ENCODE measurements at regions of chr15 and their contacts with region 1.

Region 1: DNA sequence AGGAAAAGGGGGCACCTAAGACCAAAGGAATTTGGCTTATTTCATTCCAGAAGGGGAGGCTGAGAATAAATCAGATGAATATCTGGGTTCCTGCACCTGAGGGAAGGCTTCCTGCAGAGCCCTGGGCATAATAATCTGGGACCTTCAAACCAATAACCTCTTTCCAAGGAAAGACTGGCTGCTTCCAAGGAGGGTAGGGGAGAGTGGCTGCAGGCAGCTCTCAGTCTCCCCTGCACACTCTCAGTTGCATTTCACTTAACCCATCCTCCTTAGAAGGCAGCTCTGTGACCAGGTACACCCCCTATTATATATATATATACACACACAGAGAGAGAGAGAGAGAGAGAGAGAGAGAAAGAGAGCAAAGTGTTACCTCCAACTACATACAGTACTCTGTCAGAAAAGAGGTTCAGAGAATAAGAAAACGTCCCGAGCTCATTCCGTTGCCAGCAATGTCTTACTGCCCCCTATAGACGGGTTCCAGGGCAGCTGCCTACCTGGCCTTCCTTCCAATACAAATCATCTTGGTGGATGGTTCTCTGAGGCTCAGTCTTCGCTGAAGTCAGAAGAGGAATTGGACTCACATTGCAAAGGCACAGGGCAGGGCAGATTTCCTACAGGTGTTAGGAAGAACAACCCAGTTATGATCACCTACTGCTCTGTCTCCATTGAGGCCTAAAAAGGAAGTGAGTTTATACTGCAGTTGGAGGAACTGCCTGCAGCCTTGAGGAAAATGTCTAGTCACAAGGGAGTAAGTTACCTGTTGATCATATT is 26.1 kb downstream of the CAPN3 start:
- DNase-seq: peak; percentile 59
- H3K4me3 ChIP-seq: no peak overlapping the region
- H3K27ac ChIP-seq: no peak overlapping the region
- H3K4me1 ChIP-seq: peaks cover 11% of the 10 kb centered on the region
- H3K27me3 ChIP-seq: peaks cover 0 to 6% of the 10 kb centered on the region in 2 experiments
- CTCF ChIP-seq: peak; percentile 71 to 79
- POLR2A ChIP-seq: no peak

Region 2: GRCh38 chr15:42079401-42079908 is 305.9 kb before region 1 on chr15:
- CTCF ChIA-PET with region 1: interaction called, 6 read pairs
- POLR2A ChIA-PET with region 1: no interaction called
- dilution Hi-C with region 1: no loop called
- intact Hi-C with region 1: loop called (anchors 10 kb)
- DNase-seq: no peak
- H3K4me3 ChIP-seq: no peak overlapping the region
- H3K27ac ChIP-seq: no peak overlapping the region
- H3K4me1 ChIP-seq: no peaks in the 10 kb centered on the region
- H3K27me3 ChIP-seq: peaks cover 3 to 7% of the 10 kb centered on the region in 2 experiments
- CTCF ChIP-seq: no peak
- POLR2A ChIP-seq: no peak

Region 3: DNA sequence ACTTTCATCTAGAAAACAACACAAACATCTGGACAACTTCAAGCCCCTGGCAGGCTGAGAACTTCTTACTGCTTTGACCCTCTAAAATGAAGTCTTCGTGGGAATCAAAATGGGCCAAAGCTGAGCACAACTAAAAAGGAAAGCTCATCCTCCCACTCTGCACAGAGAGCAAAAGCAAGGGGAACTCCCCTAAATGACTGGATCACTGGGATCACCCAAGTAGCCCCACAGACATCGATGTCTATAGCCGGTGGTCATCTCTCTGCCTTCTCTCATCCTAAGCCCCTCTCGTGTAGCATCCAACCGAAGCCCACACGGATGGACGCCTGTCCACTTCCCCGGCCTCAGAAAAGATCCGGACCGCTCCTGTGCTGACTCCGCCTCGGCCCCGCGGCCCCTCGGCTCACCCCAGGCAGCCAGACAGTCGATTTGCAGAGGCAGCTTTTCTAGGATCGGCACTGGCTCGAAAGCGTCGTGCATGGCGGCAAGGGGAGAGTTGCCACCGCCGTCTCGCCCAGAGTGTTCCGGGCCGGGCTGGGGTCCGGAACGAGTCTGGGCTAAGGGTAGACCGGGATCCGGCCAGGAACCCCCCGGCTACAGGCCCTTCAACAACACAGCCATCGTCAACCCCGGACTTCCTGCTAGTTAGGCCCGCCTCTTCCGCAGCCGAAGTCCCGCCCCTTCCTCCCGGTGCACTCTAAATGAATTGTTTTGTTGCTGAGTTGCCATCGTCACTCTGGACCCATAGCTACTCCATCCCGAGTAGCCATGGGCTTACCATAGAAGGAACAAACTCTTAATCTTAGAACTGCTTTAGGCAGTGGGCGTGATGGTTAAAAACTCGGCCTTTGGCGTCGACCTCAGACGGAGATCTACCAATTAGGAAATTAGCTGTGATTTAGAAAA is 177.5 kb before region 1 on chr15 and contains the start of gene VPS39:
- CTCF ChIA-PET with region 1: interaction called, 7 read pairs
- POLR2A ChIA-PET with region 1: no interaction called
- dilution Hi-C with region 1: no loop called
- intact Hi-C with region 1: loop called (anchors 1 kb)
- DNase-seq: peak; percentile 92
- H3K4me3 ChIP-seq: peak within 1 kb of the TSS; percentile 74 to 94 (median 81)
- H3K27ac ChIP-seq: peak within 1 kb of the TSS; percentile 79
- H3K4me1 ChIP-seq: peaks cover 10% of the 10 kb centered on the region
- H3K27me3 ChIP-seq: no peaks in the 10 kb centered on the region
- CTCF ChIP-seq: no peak
- POLR2A ChIP-seq: peak; percentile 88
- total RNA-seq, gene VPS39: 50.2 and 56.7 TPM in 2 replicates

Region 4: DNA sequence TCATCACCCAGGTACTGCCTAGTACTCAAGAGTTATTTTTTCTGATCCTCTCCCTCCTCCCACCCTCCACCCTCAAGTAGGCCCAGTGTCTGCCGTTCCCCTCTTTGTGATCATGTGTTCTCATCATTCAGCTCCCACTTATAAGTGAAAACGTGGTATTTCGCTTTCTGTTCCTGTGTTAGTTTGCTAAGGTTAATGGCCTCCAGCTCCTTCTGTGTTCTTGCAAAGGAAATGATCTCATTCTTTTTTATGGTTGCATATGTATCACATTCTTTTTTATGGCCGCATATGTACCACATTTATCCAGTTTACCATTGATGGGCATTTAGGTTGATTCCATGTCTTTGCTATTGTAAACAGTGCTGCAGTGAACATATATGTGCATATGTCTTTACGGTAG is 120.6 kb before region 1 on chr15:
- CTCF ChIA-PET with region 1: interaction called, 13 read pairs
- POLR2A ChIA-PET with region 1: no interaction called
- dilution Hi-C with region 1: no loop called
- intact Hi-C with region 1: no loop called
- DNase-seq: peak; percentile 11
- H3K4me3 ChIP-seq: no peak overlapping the region
- H3K27ac ChIP-seq: no peak overlapping the region
- H3K4me1 ChIP-seq: no peaks in the 10 kb centered on the region
- H3K27me3 ChIP-seq: no peaks in the 10 kb centered on the region
- CTCF ChIP-seq: no peak
- POLR2A ChIP-seq: no peak

Region 5: DNA sequence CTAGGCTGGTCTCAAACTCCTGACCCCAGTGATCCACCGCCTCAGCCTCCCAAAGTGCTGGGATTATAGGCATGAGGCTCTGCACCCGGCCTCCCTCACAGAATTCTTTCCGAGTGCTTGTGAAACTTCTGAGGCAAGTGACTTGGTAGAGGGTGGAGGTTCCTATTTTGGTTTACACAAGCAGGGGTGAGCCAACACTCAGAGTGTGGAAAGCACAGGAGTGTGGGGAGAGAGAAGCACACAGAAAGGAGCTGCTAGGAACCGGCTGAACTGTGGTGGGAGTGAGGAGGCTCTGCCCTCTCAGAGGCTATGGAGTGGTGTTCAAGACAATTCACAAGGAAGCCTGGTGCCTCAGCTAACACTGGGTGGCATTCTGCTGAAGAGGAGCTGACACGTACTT is 18.4 kb before region 1 on chr15:
- CTCF ChIA-PET with region 1: interaction called, 13 read pairs
- POLR2A ChIA-PET with region 1: no interaction called
- dilution Hi-C with region 1: no loop called
- intact Hi-C with region 1: no loop called
- DNase-seq: no peak
- H3K4me3 ChIP-seq: no peak overlapping the region
- H3K27ac ChIP-seq: no peak overlapping the region
- H3K4me1 ChIP-seq: no peaks in the 10 kb centered on the region
- H3K27me3 ChIP-seq: peaks cover 0 to 3% of the 10 kb centered on the region in 2 experiments
- CTCF ChIP-seq: no peak
- POLR2A ChIP-seq: no peak

Region 6: GRCh38 chr15:42413920-42414319 is 28.5 kb after region 1 on chr15:
- CTCF ChIA-PET with region 1: interaction called, 11 read pairs
- POLR2A ChIA-PET with region 1: no interaction called
- dilution Hi-C with region 1: no loop called
- intact Hi-C with region 1: no loop called
- DNase-seq: peak; percentile 36
- H3K4me3 ChIP-seq: no peak overlapping the region
- H3K27ac ChIP-seq: no peak overlapping the region
- H3K4me1 ChIP-seq: no peaks in the 10 kb centered on the region
- H3K27me3 ChIP-seq: no peaks in the 10 kb centered on the region
- CTCF ChIP-seq: no peak
- POLR2A ChIP-seq: no peak

Region 7: GRCh38 chr15:42444415-42445063 is 59.1 kb after region 1 on chr15:
- CTCF ChIA-PET with region 1: no interaction called
- POLR2A ChIA-PET with region 1: no interaction called
- dilution Hi-C with region 1: no loop called
- intact Hi-C with region 1: no loop called
- DNase-seq: no peak
- H3K4me3 ChIP-seq: no peak overlapping the region
- H3K27ac ChIP-seq: no peak overlapping the region
- H3K4me1 ChIP-seq: no peaks in the 10 kb centered on the region
- H3K27me3 ChIP-seq: no peaks in the 10 kb centered on the region
- CTCF ChIP-seq: no peak
- POLR2A ChIP-seq: no peak

Measured in endothelial cell of umbilical vein (primary cell).